ENCODE measurements at regions of chr4 and their contacts with region 1.

Region 1: GRCh38 chr4:14529653-14530052 is 472.6 kb upstream of the CPEB2 start:
- DNase-seq: no peak
- ATAC-seq: no peak
- H3K4me3 ChIP-seq: no peak overlapping the region
- H3K27ac ChIP-seq: no peak overlapping the region
- H3K4me1 ChIP-seq: no peaks in the 10 kb centered on the region
- H3K27me3 ChIP-seq: no peaks in the 10 kb centered on the region
- CTCF ChIP-seq: no peak
- EP300 ChIP-seq: no peak
- POLR2A ChIP-seq: no peak
- RAD21 ChIP-seq: no peak

Region 2: GRCh38 chr4:14294611-14295010 is 235.0 kb before region 1 on chr4:
- CTCF ChIA-PET with region 1: no interaction called
- POLR2A ChIA-PET with region 1: no interaction called
- in situ Hi-C with region 1: no loop called
- intact Hi-C with region 1: no loop called
- DNase-seq: no peak
- ATAC-seq: no peak
- H3K4me3 ChIP-seq: no peak overlapping the region
- H3K27ac ChIP-seq: no peak overlapping the region
- H3K4me1 ChIP-seq: no peaks in the 10 kb centered on the region
- H3K27me3 ChIP-seq: no peaks in the 10 kb centered on the region
- CTCF ChIP-seq: no peak
- EP300 ChIP-seq: no peak
- POLR2A ChIP-seq: no peak
- RAD21 ChIP-seq: no peak

Region 3: GRCh38 chr4:14596028-14596427 is 66.4 kb after region 1 on chr4:
- CTCF ChIA-PET with region 1: no interaction called
- POLR2A ChIA-PET with region 1: no interaction called
- in situ Hi-C with region 1: no loop called
- intact Hi-C with region 1: loop called (anchors 2 kb)
- DNase-seq: no peak
- ATAC-seq: no peak
- H3K4me3 ChIP-seq: no peak overlapping the region
- H3K27ac ChIP-seq: no peak overlapping the region
- H3K4me1 ChIP-seq: no peaks in the 10 kb centered on the region
- H3K27me3 ChIP-seq: no peaks in the 10 kb centered on the region
- CTCF ChIP-seq: no peak
- EP300 ChIP-seq: no peak
- POLR2A ChIP-seq: no peak
- RAD21 ChIP-seq: no peak

Region 4: DNA sequence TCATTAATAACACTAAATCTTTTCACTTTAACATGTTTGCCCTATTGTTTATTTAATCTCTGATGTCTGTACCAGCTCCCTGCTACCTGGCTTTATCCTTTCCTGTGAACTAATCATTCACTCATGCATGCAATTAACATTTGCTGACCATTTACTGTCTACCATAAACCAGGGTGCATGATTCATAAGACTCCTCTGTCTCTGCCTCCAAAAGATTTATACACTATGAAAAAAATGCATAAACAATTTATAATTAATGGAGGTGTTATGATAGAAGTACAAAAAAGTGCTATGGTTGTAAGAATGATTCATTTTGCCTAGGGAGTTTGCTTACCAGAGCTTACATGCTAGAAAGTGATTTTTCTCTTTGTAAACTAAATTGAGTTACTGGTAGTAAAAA is 448.2 kb after region 1 on chr4:
- CTCF ChIA-PET with region 1: no interaction called
- POLR2A ChIA-PET with region 1: no interaction called
- in situ Hi-C with region 1: no loop called
- intact Hi-C with region 1: no loop called
- DNase-seq: no peak
- ATAC-seq: no peak
- H3K4me3 ChIP-seq: no peak overlapping the region
- H3K27ac ChIP-seq: no peak overlapping the region
- H3K4me1 ChIP-seq: no peaks in the 10 kb centered on the region
- H3K27me3 ChIP-seq: 0 out of 5 replicates have a peak, but pooled peaks cover 0 to 2% of the 10 kb centered on the region in 2 experiments
- CTCF ChIP-seq: no peak
- EP300 ChIP-seq: no peak
- POLR2A ChIP-seq: no peak
- RAD21 ChIP-seq: no peak

Region 5: DNA sequence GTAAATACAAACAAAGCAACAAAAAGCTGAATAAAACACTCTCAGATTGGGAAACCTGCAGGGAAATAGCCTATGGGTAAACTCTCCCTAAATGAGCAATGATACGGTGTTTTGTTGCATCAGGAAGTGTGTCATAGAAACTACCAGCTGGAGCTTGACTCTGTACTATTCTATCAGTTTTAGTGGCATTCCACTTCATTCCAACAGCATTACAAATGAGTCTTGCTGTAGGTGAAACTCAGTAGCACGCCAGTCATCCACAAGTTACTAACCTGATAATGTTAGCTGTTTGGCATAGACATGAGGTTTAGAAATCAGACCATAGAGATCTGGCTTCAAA is 1383.9 kb after region 1 on chr4:
- CTCF ChIA-PET with region 1: no interaction called
- POLR2A ChIA-PET with region 1: no interaction called
- in situ Hi-C with region 1: no loop called
- intact Hi-C with region 1: no loop called
- DNase-seq: no peak
- ATAC-seq: no peak
- H3K4me3 ChIP-seq: no peak overlapping the region
- H3K27ac ChIP-seq: no peak overlapping the region
- H3K4me1 ChIP-seq: no peaks in the 10 kb centered on the region
- H3K27me3 ChIP-seq: peaks cover 0 to 4% of the 10 kb centered on the region in 2 experiments; a peak in 1 of 5 replicates
- CTCF ChIP-seq: no peak
- EP300 ChIP-seq: no peak
- POLR2A ChIP-seq: no peak
- RAD21 ChIP-seq: no peak